Colonic mucosa (tissue), 4 donors: ENCODE measurements at regions of chr1 and their contacts with region 1.

Region 1: DNA sequence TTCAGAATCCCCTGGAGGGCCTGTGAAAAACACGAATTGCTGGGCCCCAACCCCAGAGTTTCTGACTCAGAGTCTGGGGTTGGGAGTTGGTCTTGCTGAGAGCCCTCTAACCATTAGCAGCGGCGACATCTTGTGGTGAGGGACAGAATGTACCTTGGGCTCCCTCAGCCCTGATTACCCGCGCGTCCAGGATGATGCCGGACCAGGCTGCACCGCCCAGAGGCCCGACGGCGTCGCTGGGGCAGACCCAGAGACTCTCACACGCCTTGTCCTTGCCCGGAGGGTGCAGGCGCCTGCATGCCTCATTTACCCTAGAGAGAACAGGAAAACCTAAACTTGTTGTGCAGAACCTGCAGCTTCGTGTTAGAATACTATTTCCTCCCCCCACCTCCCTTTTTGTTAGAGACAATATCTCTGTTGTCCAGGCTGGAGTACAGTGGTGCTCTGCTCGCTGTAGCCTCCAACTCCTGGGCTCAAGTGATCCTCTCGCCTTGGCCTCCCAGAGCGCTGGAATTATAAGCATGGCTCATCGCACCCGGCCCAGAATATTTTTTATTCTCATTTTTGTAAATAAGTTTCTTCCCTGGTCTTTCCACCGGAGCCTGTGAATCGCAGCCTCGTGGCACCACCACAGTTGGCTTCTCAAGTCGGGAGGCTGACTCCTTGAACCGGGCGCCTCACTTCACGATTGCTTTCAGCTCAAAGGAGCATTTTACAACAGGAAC is 22.2 kb upstream of the RD3 start:
- DNase-seq: peak; percentile 90
- H3K4me3 ChIP-seq: no peak overlapping the region
- H3K27ac ChIP-seq: peak overlapping the region; percentile 90
- H3K4me1 ChIP-seq: peaks cover 9% of the 10 kb centered on the region
- H3K27me3 ChIP-seq: no peaks in the 10 kb centered on the region
- CTCF ChIP-seq: peak; percentile 76

Region 2: GRCh38 chr1:211476200-211476849 is 37.9 kb before region 1 on chr1:
- intact Hi-C with region 1: loop called (anchors 5 kb)
- DNase-seq: peak; percentile 84
- H3K4me3 ChIP-seq: no peak overlapping the region
- H3K27ac ChIP-seq: no peak overlapping the region
- H3K4me1 ChIP-seq: no peaks in the 10 kb centered on the region
- H3K27me3 ChIP-seq: no peaks in the 10 kb centered on the region
- CTCF ChIP-seq: peak; percentile 72

Region 3: DNA sequence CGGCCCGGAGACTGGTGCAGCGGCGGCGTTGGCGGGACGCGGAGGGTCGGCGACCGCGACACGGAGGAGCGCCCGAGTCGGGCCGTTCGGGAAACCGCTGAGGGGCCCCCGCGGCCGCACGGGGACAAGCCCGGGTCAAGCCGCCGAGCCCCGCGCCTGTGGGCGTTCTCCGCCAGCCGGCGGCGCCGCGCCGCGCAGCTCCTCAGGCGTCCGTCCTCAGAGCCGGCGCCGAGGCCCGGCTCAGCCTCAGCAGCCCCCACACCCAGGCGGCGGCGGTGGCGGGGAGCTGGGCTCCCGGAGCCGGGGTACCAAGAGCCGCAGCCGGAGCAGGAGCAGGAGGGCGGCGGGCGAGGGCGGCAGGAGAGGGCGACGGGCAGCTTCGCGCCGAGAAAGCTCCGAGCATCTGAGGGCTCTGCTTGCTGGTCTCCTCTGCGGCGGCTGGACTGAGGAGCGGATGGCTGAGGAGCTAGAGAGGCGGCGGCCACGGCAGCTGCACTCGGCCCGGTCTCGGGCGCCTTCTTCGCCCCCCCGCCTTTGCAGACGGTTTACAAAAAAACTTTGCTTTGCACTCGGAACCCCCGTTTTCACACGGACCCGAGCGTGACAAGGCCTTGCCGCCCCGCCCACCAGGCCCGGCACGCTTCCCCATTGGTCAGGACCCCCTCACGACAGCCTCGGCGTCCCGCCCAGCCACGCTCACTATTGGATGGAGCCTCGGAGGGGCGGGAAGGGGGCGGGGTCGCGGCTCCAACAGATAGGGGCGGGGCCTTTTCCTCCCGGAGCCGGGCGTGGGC is 64.6 kb after region 1 on chr1 and contains the start of gene SLC30A1:
- intact Hi-C with region 1: loop called (anchors 2 kb)
- DNase-seq: peak; percentile 100
- H3K4me3 ChIP-seq: peak within 1 kb of the TSS; percentile 66
- H3K27ac ChIP-seq: peak within 1 kb of the TSS; percentile 98
- H3K4me1 ChIP-seq: no peaks in the 10 kb centered on the region
- H3K27me3 ChIP-seq: no peaks in the 10 kb centered on the region
- CTCF ChIP-seq: no peak
- total RNA-seq, gene SLC30A1: 18.5 to 28.0 TPM